Activated CD8-positive, alpha-beta memory T cell treated with anti-CD3 and anti-CD28 coated beads, Interleukin-2, amount 10 ng/mL, durations not matched to agents 7 days and 5 days (primary cell): ENCODE measurements at regions of chr1 and their contacts with region 1.

Region 1: DNA sequence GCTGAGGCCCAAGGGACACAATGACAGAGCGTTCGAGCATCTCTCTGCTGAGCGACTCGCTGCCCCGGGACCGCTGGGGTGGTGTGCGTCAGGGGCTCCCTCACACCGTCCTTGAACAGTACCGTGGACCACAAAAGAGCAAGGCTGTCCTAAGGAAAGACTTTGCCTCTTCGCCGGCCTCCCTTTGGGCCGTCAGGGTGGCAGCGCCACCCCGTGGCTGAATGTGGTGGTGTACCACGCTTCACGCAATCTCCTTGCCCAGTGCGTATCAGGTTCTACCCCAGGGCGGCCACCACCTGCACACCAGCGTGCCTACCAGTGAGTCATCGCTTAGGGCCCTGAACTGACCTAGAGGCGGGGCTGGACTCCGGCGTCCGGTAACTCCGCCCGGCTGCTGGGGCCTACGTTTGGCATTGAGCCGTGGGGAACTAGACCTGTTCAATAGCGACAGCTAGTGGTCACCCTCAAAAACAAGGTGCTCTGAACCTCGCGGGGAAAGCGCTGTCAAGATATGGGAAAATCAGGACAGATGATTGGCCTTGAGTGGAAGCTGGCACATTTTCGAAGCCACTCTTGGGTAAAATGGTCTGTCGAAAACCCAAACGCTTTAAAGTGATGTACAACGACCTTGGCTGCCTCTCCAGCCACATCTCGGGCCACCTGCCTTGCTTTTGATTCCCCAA is 8.1 kb upstream of the TRAF3IP3 start:
- DNase-seq: peak; percentile 94
- ATAC-seq: peak; percentile 80
- H3K4me3 Mint-ChIP-seq: peak overlapping the region; percentile 71
- H3K27ac Mint-ChIP-seq: peak overlapping the region; percentile 87
- H3K4me1 Mint-ChIP-seq: peaks cover 58% of the 10 kb centered on the region
- H3K27me3 Mint-ChIP-seq: no peaks in the 10 kb centered on the region

Region 2: GRCh38 chr1:209539576-209539975 is 208.1 kb before region 1 on chr1:
- CTCF ChIA-PET with region 1: no interaction called
- DNase-seq: no peak
- ATAC-seq: no peak
- H3K4me3 Mint-ChIP-seq: no peak overlapping the region
- H3K27ac Mint-ChIP-seq: no peak overlapping the region
- H3K4me1 Mint-ChIP-seq: peaks cover 7% of the 10 kb centered on the region
- H3K27me3 Mint-ChIP-seq: peaks cover 76% of the 10 kb centered on the region

Region 3: GRCh38 chr1:209565759-209566678 is 181.7 kb before region 1 on chr1:
- CTCF ChIA-PET with region 1: interaction called, 14 read pairs
- DNase-seq: peak; percentile 85
- ATAC-seq: peak; percentile 89
- H3K4me3 Mint-ChIP-seq: no peak overlapping the region
- H3K27ac Mint-ChIP-seq: no peak overlapping the region
- H3K4me1 Mint-ChIP-seq: peaks cover 9% of the 10 kb centered on the region
- H3K27me3 Mint-ChIP-seq: peaks cover 38% of the 10 kb centered on the region

Region 4: DNA sequence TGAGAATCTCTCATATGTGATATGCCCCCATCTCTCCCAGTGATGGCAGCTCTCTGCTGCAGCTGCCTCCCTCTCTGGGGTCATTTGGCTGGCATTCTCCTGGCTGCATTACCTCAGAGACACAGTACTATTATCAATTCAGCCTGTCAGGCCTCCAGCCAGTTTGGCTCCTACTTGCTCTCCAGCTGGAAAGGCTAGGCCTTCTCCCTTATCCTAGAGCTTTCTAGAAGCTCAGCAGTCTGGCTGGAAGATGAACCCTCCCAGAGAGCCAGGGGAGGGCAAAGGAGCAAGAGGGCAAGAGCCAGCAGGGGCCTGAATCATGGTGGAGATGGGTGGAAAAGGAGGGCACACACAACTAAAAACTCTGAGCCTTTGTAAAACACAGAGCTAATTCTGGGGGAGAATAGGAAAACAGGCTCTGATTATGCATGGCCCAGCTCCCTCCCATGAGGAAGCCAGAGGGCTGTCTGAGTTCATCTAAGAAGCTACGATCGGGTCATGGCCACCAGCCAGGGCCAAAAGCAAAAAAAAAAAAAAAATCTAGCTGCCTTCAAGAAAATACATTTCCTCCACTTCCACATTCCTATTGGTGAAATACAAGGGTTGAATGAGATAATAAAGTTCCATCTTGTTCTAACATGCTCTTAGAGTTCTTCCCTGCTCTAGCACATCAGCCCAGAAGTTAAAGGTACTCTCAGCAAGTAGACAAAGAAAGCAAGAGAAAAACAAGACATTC is 104.3 kb before region 1 on chr1:
- CTCF ChIA-PET with region 1: interaction called, 10 read pairs
- DNase-seq: no peak
- ATAC-seq: no peak
- H3K4me3 Mint-ChIP-seq: no peak overlapping the region
- H3K27ac Mint-ChIP-seq: no peak overlapping the region
- H3K4me1 Mint-ChIP-seq: no peaks in the 10 kb centered on the region
- H3K27me3 Mint-ChIP-seq: no peaks in the 10 kb centered on the region

Region 5: GRCh38 chr1:209674957-209675564 is 72.7 kb before region 1 on chr1 and contains the start of gene G0S2:
- CTCF ChIA-PET with region 1: interaction called, 13 read pairs
- DNase-seq: no peak
- ATAC-seq: peak; percentile 24
- H3K4me3 Mint-ChIP-seq: peak within 1 kb of the TSS; percentile 50
- H3K27ac Mint-ChIP-seq: peak within 1 kb of the TSS; percentile 10
- H3K4me1 Mint-ChIP-seq: peaks cover 49% of the 10 kb centered on the region
- H3K27me3 Mint-ChIP-seq: peaks cover 56% of the 10 kb centered on the region
- total RNA-seq, gene G0S2: 0.70 to 1.5 TPM

Region 6: DNA sequence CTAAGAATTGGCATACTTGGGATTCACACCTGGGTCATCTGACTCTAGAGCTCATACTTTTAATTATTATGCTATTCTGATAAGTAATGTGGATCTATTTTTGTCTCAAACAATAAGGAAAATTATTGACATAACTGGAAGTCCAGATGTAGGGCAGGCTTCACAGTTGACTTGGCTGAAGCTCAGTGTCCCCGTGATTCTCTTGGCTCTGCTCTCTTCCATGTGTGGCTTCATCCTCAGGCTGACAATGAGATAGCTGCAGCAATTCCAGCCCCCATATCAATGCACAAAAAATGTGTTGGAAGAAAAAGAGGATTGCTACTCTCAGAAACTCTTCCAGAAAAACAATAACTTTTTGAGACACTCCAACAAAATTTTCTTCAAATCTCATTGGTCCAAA is 19.3 kb before region 1 on chr1:
- CTCF ChIA-PET with region 1: interaction called, 13 read pairs
- DNase-seq: no peak
- ATAC-seq: no peak
- H3K4me3 Mint-ChIP-seq: no peak overlapping the region
- H3K27ac Mint-ChIP-seq: no peak overlapping the region
- H3K4me1 Mint-ChIP-seq: peaks cover 16% of the 10 kb centered on the region
- H3K27me3 Mint-ChIP-seq: no peaks in the 10 kb centered on the region

Region 7: GRCh38 chr1:209769171-209769904 is 21.6 kb after region 1 on chr1:
- CTCF ChIA-PET with region 1: interaction called, 105 read pairs
- DNase-seq: peak; percentile 92
- ATAC-seq: peak; percentile 65
- H3K4me3 Mint-ChIP-seq: no peak overlapping the region
- H3K27ac Mint-ChIP-seq: no peak overlapping the region
- H3K4me1 Mint-ChIP-seq: peaks cover 41% of the 10 kb centered on the region
- H3K27me3 Mint-ChIP-seq: no peaks in the 10 kb centered on the region

Region 8: GRCh38 chr1:209805875-209806760 is 58.4 kb after region 1 on chr1 and contains the start of gene IRF6:
- CTCF ChIA-PET with region 1: no interaction called
- DNase-seq: peak; percentile 89
- ATAC-seq: peak; percentile 96
- H3K4me3 Mint-ChIP-seq: peak within 1 kb of the TSS; percentile 83
- H3K27ac Mint-ChIP-seq: peak within 1 kb of the TSS; percentile 93
- H3K4me1 Mint-ChIP-seq: peaks cover 18% of the 10 kb centered on the region
- H3K27me3 Mint-ChIP-seq: peaks cover 9% of the 10 kb centered on the region
- total RNA-seq, gene IRF6: 1.3 to 1.7 TPM

Region 9: DNA sequence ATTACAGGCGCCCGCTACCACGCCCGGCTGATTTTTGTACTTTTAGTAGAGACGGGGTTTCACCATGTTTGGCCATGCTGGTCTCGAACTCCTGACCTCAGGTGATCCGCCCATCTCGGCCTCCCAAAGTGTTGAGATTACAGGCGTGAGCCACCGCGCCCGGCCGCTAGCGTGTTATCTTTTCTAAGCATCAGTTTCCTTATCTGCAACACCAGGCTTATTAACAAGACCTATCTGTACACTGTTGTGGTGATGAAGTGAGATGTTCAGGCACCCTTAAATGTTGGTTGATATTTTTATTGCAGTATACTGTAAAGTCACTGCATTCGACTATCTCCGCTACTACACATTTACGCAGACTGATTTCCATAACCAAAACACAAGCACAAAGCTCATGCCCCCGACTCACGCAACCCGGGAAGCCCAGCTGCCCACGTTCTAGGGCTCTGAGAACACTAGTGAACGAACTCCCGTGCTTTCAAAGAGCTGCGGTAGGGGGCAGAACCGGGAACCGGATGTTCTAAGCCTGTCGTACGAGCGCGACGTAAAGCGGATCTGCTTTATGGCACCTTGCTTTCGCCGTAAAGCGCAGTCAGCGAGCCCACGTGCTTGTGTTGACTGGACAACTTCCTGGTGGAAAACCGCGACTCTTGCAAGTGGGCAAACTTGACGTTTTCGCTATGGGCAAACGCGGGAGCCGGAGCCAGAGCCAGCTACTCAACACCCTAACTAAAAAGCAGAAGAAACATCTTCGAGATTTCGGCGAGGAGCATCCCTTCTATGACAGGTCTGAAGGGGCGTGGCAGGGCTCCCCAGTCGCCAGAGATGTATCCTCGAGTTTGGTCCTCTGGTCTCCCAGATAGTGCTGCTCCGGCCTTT is 79.9 kb after region 1 on chr1 and contains the start of gene UTP25:
- CTCF ChIA-PET with region 1: interaction called, 13 read pairs
- DNase-seq: peak; percentile 96
- ATAC-seq: peak; percentile 89
- H3K4me3 Mint-ChIP-seq: peak within 1 kb of the TSS; percentile 91
- H3K27ac Mint-ChIP-seq: peak within 1 kb of the TSS; percentile 81
- H3K4me1 Mint-ChIP-seq: peaks cover 39% of the 10 kb centered on the region
- H3K27me3 Mint-ChIP-seq: peaks cover 12% of the 10 kb centered on the region
- total RNA-seq, gene UTP25: 4.7 to 9.7 TPM